GM12878 (cell line): ENCODE measurements at regions of chr7 and their contacts with region 1.

Region 1: DNA sequence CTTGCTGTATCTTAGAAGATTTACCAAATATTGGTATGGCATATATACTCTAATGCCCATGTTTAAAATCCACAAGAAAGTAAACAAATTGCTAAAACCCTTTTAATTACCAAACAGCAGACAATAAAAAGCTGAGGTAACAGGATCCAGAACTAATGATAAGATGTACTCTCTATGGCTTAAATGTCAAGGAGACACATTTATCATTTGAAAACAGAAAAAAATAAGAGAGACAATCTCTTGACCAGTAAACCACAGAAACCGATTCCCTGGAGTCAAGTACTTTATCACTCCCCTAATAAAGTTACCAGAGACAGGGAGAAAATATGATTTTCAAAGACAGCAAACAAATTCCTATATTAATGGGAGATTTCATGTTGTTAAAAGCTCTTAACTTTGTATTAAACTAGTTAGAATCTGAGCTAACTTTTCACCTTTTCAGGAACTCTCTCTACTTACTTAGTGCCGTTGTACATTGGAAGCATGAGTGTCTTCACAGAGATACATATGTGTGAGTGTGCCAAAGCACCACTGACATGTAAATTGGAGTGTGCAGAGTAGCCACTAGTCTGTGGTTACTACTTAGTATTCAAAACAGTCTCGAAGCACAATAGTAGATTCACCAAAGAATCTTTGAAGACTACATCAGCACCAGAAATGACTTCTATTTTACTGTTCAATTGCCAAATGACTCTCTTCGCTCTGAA is 44.2 kb downstream of the TSPAN12 start:
- DNase-seq: no peak
- ATAC-seq: peak; percentile 48
- H3K4me3 ChIP-seq: no peak overlapping the region
- H3K27ac ChIP-seq: no peak overlapping the region
- H3K4me1 ChIP-seq: no peaks in the 10 kb centered on the region
- H3K27me3 ChIP-seq: no peaks in the 10 kb centered on the region
- CTCF ChIP-seq: no peak
- EP300 ChIP-seq: no peak
- POLR2A ChIP-seq: no peak
- RAD21 ChIP-seq: no peak

Region 2: DNA sequence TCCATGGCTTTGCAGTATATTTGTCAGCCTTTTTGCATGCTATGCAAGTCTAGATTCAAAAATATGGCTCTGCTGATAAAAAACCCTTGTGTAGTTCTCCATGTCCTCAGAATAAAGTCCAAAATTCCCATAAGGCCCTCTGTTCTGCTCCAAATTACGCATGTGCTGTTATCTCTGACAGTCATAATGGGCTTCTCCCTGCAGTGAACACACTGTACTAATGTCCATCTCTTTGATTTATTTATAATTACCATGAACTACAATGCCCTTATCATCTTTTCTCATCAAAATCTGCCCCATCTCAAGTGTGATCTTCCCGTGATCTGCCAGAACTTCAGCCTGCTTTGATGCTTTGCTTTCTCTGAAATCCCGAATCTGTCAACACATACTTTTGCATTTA is 43.5 kb before region 1 on chr7:
- CTCF ChIA-PET with region 1: no interaction called
- POLR2A ChIA-PET with region 1: no interaction called
- RAD21 ChIA-PET with region 1: no interaction called
- SMC1A ChIA-PET with region 1: no interaction called
- in situ Hi-C with region 1: no loop called
- intact Hi-C with region 1: no loop called
- DNase-seq: no peak
- ATAC-seq: no peak
- H3K4me3 ChIP-seq: no peak overlapping the region
- H3K27ac ChIP-seq: no peak overlapping the region
- H3K4me1 ChIP-seq: no peaks in the 10 kb centered on the region
- H3K27me3 ChIP-seq: no peaks in the 10 kb centered on the region
- CTCF ChIP-seq: no peak
- EP300 ChIP-seq: no peak
- POLR2A ChIP-seq: no peak
- RAD21 ChIP-seq: no peak

Region 3: GRCh38 chr7:120799147-120799546 is 14.6 kb before region 1 on chr7:
- CTCF ChIA-PET with region 1: interaction called, 11 read pairs
- POLR2A ChIA-PET with region 1: no interaction called
- RAD21 ChIA-PET with region 1: no interaction called
- SMC1A ChIA-PET with region 1: interaction called, 83 read pairs
- in situ Hi-C with region 1: no loop called
- intact Hi-C with region 1: no loop called
- DNase-seq: no peak
- ATAC-seq: no peak
- H3K4me3 ChIP-seq: no peak overlapping the region
- H3K27ac ChIP-seq: no peak overlapping the region
- H3K4me1 ChIP-seq: no peaks in the 10 kb centered on the region
- H3K27me3 ChIP-seq: no peaks in the 10 kb centered on the region
- CTCF ChIP-seq: no peak
- EP300 ChIP-seq: no peak
- POLR2A ChIP-seq: no peak
- RAD21 ChIP-seq: no peak